Esophagus squamous epithelium (tissue), 5 donors: ENCODE measurements at regions of chr10 and their contacts with region 1.

Region 1: DNA sequence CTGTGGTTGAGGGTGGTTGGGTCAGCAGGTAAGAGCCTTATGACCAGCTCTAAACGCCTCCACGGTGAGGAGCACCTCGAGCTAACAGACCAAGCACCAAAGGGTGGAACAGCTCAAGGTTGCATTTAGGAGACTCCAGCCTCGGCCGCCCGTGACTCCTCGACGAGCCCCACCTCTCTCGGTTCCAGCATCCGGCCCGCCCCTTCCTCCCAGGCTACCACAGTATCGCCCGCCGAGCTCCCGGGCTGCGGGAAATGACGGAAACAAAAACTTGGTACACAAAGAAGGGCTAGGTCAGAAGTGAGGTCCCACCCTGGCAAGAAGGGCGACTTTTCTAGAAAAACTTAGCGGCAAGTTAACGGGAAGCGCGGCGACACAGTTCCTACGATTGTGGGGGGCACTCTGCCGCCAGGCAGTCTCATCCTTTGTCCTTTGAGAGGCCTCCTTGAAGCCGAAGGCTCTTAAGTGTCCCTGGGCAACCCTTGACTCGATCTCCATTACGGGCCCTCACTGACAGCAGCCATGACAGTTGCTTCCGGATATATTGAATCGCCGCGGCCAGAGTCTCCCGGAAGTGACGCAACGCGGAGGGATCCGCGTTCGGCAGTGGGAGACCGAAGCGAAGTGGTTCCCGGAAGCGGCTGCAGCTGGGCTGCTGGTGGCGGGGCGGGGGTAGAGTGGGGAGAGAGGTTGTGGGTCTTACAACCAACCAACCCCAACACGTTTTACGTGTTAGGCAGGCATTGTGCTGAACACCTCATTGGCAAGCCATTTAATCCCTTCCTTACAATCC is 40.2 kb upstream of the ZNF518A start:
- DNase-seq: peak; percentile 85
- H3K4me3 ChIP-seq: peak overlapping the region; percentile 53 to 85 (median 73)
- H3K27ac ChIP-seq: peak overlapping the region; percentile 85 to 95 (median 93)
- H3K4me1 ChIP-seq: peaks cover 0 to 12% (median 0%) of the 10 kb centered on the region in 3 donors
- H3K27me3 ChIP-seq: peaks cover 0 to 37% (median 5%) of the 10 kb centered on the region in 4 donors
- CTCF ChIP-seq: no peak
- POLR2A ChIP-seq: peak in 2 of 4 donors; percentile 24 to 28

Region 2: GRCh38 chr10:96129387-96130325 is 39.8 kb after region 1 on chr10 and contains the start of gene ZNF518A:
- intact Hi-C with region 1: loop called (anchors 5 kb)
- DNase-seq: peak; percentile 76
- H3K4me3 ChIP-seq: peak within 1 kb of the TSS; percentile 58 to 87 (median 80)
- H3K27ac ChIP-seq: peak within 1 kb of the TSS; percentile 93 to 98 (median 97)
- H3K4me1 ChIP-seq: peaks cover 0 to 19% (median 7%) of the 10 kb centered on the region in 3 donors
- H3K27me3 ChIP-seq: peaks cover 0 to 46% (median 3%) of the 10 kb centered on the region in 4 donors
- CTCF ChIP-seq: peak in 1 of 6 experiments; percentile 4
- POLR2A ChIP-seq: peak in 2 of 4 donors; percentile 27 to 38
- total RNA-seq, gene ZNF518A: 8.3 to 16.4 (median 12.1) TPM